ENCODE measurements at regions of chr18 and their contacts with region 1.

Region 1: GRCh38 chr18:59988098-59988706 is 88.4 kb downstream of the PMAIP1 start:
- DNase-seq: peak; percentile 67
- ATAC-seq: peak; percentile 47
- H3K4me3 ChIP-seq: no peak overlapping the region
- H3K4me3 Mint-ChIP-seq: no peak overlapping the region
- H3K27ac ChIP-seq: no peak overlapping the region
- H3K27ac Mint-ChIP-seq: no peak overlapping the region
- H3K4me1 ChIP-seq: no peaks in the 10 kb centered on the region
- H3K4me1 Mint-ChIP-seq: no peaks in the 10 kb centered on the region
- H3K27me3 ChIP-seq: peaks cover 0 to 5% (median 4%) of the 10 kb centered on the region in 4 experiments
- H3K27me3 Mint-ChIP-seq: peaks cover 31% of the 10 kb centered on the region
- CTCF ChIP-seq: peak; percentile 100

Region 2: GRCh38 chr18:59837586-59837985 is 150.6 kb before region 1 on chr18:
- CTCF ChIA-PET with region 1: interaction called, 81 read pairs
- POLR2A ChIA-PET with region 1: no interaction called
- intact Hi-C with region 1: loop called (anchors 1 kb)
- DNase-seq: peak; percentile 81
- ATAC-seq: peak; percentile 72
- H3K4me3 ChIP-seq: no peak overlapping the region
- H3K4me3 Mint-ChIP-seq: no peak overlapping the region
- H3K27ac ChIP-seq: no peak overlapping the region
- H3K27ac Mint-ChIP-seq: no peak overlapping the region
- H3K4me1 ChIP-seq: peaks cover 5 to 19% of the 10 kb centered on the region in 2 donors
- H3K4me1 Mint-ChIP-seq: peaks cover 24% of the 10 kb centered on the region
- H3K27me3 ChIP-seq: no peaks in the 10 kb centered on the region
- H3K27me3 Mint-ChIP-seq: no peaks in the 10 kb centered on the region
- CTCF ChIP-seq: peak; percentile 93

Region 3: GRCh38 chr18:59899298-59900221 is 88.6 kb before region 1 on chr18 and contains the start of gene PMAIP1:
- CTCF ChIA-PET with region 1: interaction called, 24 read pairs
- POLR2A ChIA-PET with region 1: no interaction called
- intact Hi-C with region 1: no loop called
- DNase-seq: peak; percentile 92
- ATAC-seq: peak; percentile 82
- H3K4me3 ChIP-seq: peak within 1 kb of the TSS; percentile 83 to 96 (median 95)
- H3K4me3 Mint-ChIP-seq: peak within 1 kb of the TSS; percentile 98
- H3K27ac ChIP-seq: peak within 1 kb of the TSS; percentile 92 to 95
- H3K27ac Mint-ChIP-seq: peak within 1 kb of the TSS; percentile 97
- H3K4me1 ChIP-seq: peaks cover 26 to 35% of the 10 kb centered on the region in 2 donors
- H3K4me1 Mint-ChIP-seq: peaks cover 44% of the 10 kb centered on the region
- H3K27me3 ChIP-seq: no peaks in the 10 kb centered on the region
- H3K27me3 Mint-ChIP-seq: no peaks in the 10 kb centered on the region
- CTCF ChIP-seq: no peak
- total RNA-seq, gene PMAIP1: 67.2 and 69.6 TPM in 2 replicates

Region 4: DNA sequence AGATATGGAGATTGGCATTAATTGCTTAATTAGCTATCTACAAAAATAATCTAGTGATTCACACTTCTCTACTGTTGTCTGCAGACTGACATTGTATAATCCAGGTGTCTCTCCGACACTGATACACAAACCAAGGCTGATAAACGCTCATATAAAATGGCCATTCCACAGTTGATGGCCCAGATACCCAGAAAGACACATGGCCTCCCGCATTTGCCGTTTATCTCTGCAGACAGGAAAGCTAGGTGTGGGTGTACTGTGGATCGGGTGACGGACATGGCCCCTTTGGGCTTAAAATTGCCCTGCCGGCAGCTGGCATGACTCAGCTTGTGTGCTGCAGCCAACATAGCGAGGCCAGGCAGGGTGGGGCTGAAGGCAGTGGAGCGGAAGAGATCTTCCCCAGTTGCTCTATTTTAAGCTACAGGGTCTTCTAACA is 69.9 kb before region 1 on chr18:
- CTCF ChIA-PET with region 1: interaction called, 15 read pairs
- POLR2A ChIA-PET with region 1: no interaction called
- intact Hi-C with region 1: no loop called
- DNase-seq: peak; percentile 54
- ATAC-seq: peak; percentile 82
- H3K4me3 ChIP-seq: peak overlapping the region in 4 of 5 experiments; percentile 15 to 43 (median 34)
- H3K4me3 Mint-ChIP-seq: peak overlapping the region; percentile 74
- H3K27ac ChIP-seq: no peak overlapping the region
- H3K27ac Mint-ChIP-seq: peak overlapping the region; percentile 68
- H3K4me1 ChIP-seq: peaks cover 28 to 39% of the 10 kb centered on the region in 2 donors
- H3K4me1 Mint-ChIP-seq: peaks cover 35% of the 10 kb centered on the region
- H3K27me3 ChIP-seq: no peaks in the 10 kb centered on the region
- H3K27me3 Mint-ChIP-seq: no peaks in the 10 kb centered on the region
- CTCF ChIP-seq: no peak

Region 5: GRCh38 chr18:59966913-59967312 is 21.3 kb before region 1 on chr18:
- CTCF ChIA-PET with region 1: interaction called, 20 read pairs
- POLR2A ChIA-PET with region 1: no interaction called
- intact Hi-C with region 1: no loop called
- DNase-seq: no peak
- ATAC-seq: no peak
- H3K4me3 ChIP-seq: no peak overlapping the region
- H3K4me3 Mint-ChIP-seq: no peak overlapping the region
- H3K27ac ChIP-seq: no peak overlapping the region
- H3K27ac Mint-ChIP-seq: peak overlapping the region; percentile 38
- H3K4me1 ChIP-seq: peaks cover 4 to 8% of the 10 kb centered on the region in 2 donors
- H3K4me1 Mint-ChIP-seq: peaks cover 17% of the 10 kb centered on the region
- H3K27me3 ChIP-seq: peaks cover 0 to 8% (median 4%) of the 10 kb centered on the region in 4 experiments
- H3K27me3 Mint-ChIP-seq: peaks cover 21% of the 10 kb centered on the region
- CTCF ChIP-seq: no peak

Region 6: DNA sequence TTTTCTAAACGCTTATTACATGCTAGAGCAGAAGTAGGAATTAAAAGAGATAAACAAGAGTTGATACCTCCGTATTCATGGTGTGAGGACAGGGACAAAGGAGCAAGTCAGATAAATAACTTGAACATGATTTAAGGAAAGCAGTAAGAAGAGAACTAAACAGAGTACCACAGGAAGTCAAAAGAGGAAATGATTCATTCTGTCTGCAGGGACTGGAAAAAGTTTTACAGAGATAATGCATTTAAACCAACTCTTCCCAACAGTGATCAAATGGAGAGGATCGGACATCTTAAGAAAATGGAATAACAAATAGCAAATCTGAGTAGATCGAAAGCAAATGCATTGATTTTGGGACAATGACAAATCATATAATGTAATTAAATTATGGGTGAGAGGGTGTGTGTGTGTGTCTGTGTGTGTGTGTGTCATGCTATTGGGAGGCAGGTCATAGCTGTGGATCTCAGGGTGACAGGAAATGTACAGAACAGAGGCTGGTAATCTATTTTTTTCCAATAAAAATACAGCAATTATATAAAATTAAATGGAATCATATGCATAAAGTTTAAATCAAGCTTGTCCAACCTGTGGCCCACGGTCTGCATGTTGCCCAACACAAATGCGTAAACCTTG is 271.0 kb after region 1 on chr18:
- CTCF ChIA-PET with region 1: no interaction called
- POLR2A ChIA-PET with region 1: no interaction called
- intact Hi-C with region 1: no loop called
- DNase-seq: no peak
- ATAC-seq: no peak
- H3K4me3 ChIP-seq: no peak overlapping the region
- H3K4me3 Mint-ChIP-seq: no peak overlapping the region
- H3K27ac ChIP-seq: no peak overlapping the region
- H3K27ac Mint-ChIP-seq: no peak overlapping the region
- H3K4me1 ChIP-seq: no peaks in the 10 kb centered on the region
- H3K4me1 Mint-ChIP-seq: peaks cover 4% of the 10 kb centered on the region
- H3K27me3 ChIP-seq: peaks cover 0 to 2% (median under 1%) of the 10 kb centered on the region in 4 experiments
- H3K27me3 Mint-ChIP-seq: peaks cover 18% of the 10 kb centered on the region
- CTCF ChIP-seq: no peak

Region 7: DNA sequence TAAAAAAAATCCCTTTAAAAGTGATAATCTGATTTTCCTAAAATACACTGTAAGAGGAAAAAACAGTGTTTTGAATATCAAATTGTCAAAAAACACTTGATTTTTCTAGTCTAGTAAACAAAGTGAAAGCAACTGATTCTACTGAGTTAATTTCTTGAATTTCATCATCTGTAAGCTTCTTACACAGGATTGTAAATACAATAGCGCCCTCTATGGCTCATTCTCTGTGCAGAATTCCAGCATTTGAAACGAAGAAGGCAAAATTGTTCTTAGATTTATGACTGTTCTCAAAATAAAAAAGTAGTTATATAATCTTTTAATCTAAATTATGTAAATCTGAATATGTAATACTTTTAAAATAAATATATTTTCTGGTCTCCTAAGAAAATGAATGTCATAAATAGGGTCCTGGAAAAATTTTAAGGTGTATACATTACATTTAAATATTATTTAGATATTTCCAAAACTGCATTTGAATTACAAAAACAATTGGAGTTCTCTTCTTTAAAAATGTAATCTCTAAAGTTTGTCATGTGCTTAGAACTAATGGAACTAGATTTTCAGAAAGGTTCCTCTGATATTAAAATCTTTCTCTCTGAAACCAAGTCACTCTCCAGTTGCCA is 561.2 kb after region 1 on chr18:
- CTCF ChIA-PET with region 1: interaction called, 15 read pairs
- POLR2A ChIA-PET with region 1: no interaction called
- intact Hi-C with region 1: no loop called
- DNase-seq: peak; percentile 52
- ATAC-seq: no peak
- H3K4me3 ChIP-seq: no peak overlapping the region
- H3K4me3 Mint-ChIP-seq: no peak overlapping the region
- H3K27ac ChIP-seq: no peak overlapping the region
- H3K27ac Mint-ChIP-seq: no peak overlapping the region
- H3K4me1 ChIP-seq: no peaks in the 10 kb centered on the region
- H3K4me1 Mint-ChIP-seq: no peaks in the 10 kb centered on the region
- H3K27me3 ChIP-seq: no peaks in the 10 kb centered on the region
- H3K27me3 Mint-ChIP-seq: no peaks in the 10 kb centered on the region
- CTCF ChIP-seq: peak; percentile 86

Region 8: DNA sequence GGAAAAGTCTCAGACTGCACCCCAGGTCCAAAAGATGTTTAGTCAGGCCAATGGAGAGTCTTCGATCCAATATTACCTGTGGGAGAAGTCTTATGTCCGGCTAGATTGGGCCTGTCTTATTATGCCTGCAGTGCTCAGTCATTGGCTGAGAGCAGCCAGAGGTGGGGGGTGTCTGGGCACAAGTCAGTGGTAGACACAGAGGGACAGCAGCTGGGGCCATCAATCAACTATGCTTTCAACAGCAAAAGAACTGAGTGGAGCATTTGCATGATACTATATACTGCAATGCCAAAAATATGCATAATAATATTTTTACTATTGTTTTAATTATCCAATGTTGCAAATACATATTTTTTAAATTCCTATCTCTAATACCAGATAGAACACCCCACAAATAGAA is 1046.4 kb after region 1 on chr18:
- CTCF ChIA-PET with region 1: no interaction called
- POLR2A ChIA-PET with region 1: no interaction called
- intact Hi-C with region 1: no loop called
- DNase-seq: no peak
- ATAC-seq: no peak
- H3K4me3 ChIP-seq: no peak overlapping the region
- H3K4me3 Mint-ChIP-seq: no peak overlapping the region
- H3K27ac ChIP-seq: no peak overlapping the region
- H3K27ac Mint-ChIP-seq: no peak overlapping the region
- H3K4me1 ChIP-seq: no peaks in the 10 kb centered on the region
- H3K4me1 Mint-ChIP-seq: no peaks in the 10 kb centered on the region
- H3K27me3 ChIP-seq: no peaks in the 10 kb centered on the region
- H3K27me3 Mint-ChIP-seq: no peaks in the 10 kb centered on the region
- CTCF ChIP-seq: no peak

Measured in B cell (primary cell).